ENCODE measurements at regions of chr1 and their contacts with region 1.

Region 1: GRCh38 chr1:162035241-162035640 is 11.6 kb upstream of the OLFML2B start:
- DNase-seq: no peak
- ATAC-seq: no peak
- H3K4me3 ChIP-seq: no peak overlapping the region
- H3K4me3 Mint-ChIP-seq: no peak overlapping the region
- H3K27ac ChIP-seq: no peak overlapping the region
- H3K27ac Mint-ChIP-seq: no peak overlapping the region
- H3K4me1 ChIP-seq: no peaks in the 10 kb centered on the region
- H3K4me1 Mint-ChIP-seq: peaks cover 0 to 7% (median 2%) of the 10 kb centered on the region in 3 donors
- H3K27me3 ChIP-seq: peaks cover 0 to 13% of the 10 kb centered on the region in 2 experiments
- H3K27me3 Mint-ChIP-seq: peaks cover 10 to 21% of the 10 kb centered on the region in 2 donors

Region 2: GRCh38 chr1:161792740-161793139 is 242.5 kb before region 1 on chr1:
- CTCF ChIA-PET with region 1: interaction called, 60 to 205 read pairs
- POLR2A ChIA-PET with region 1: interaction called in 1 of 2 experiments, 5 read pairs
- DNase-seq: peak in 2 of 35 experiments; percentile 18 to 64
- ATAC-seq: peak in 2 of 4 experiments; percentile 38 to 48
- H3K4me3 ChIP-seq: no peak overlapping the region
- H3K4me3 Mint-ChIP-seq: no peak overlapping the region
- H3K27ac ChIP-seq: no peak overlapping the region
- H3K27ac Mint-ChIP-seq: no peak overlapping the region
- H3K4me1 ChIP-seq: no peaks in the 10 kb centered on the region
- H3K4me1 Mint-ChIP-seq: peaks cover 5 to 6% (median 6%) of the 10 kb centered on the region in 3 donors
- H3K27me3 ChIP-seq: no peaks in the 10 kb centered on the region
- H3K27me3 Mint-ChIP-seq: no peaks in the 10 kb centered on the region

Region 3: GRCh38 chr1:161864577-161864976 is 170.7 kb before region 1 on chr1:
- CTCF ChIA-PET with region 1: interaction called, 16 to 22 read pairs
- POLR2A ChIA-PET with region 1: no interaction called
- DNase-seq: peak in 19 of 35 experiments; percentile 1 to 34 (median 4)
- ATAC-seq: no peak
- H3K4me3 ChIP-seq: no peak overlapping the region
- H3K4me3 Mint-ChIP-seq: no peak overlapping the region
- H3K27ac ChIP-seq: no peak overlapping the region
- H3K27ac Mint-ChIP-seq: no peak overlapping the region
- H3K4me1 ChIP-seq: no peaks in the 10 kb centered on the region
- H3K4me1 Mint-ChIP-seq: no peaks in the 10 kb centered on the region
- H3K27me3 ChIP-seq: no peaks in the 10 kb centered on the region
- H3K27me3 Mint-ChIP-seq: no peaks in the 10 kb centered on the region

Region 4: GRCh38 chr1:161962091-161962887 is 73.0 kb before region 1 on chr1:
- CTCF ChIA-PET with region 1: no interaction called
- POLR2A ChIA-PET with region 1: no interaction called
- DNase-seq: peak in 1 of 35 experiments; percentile 12
- ATAC-seq: peak; percentile 34 to 64 (median 52)
- H3K4me3 ChIP-seq: peak overlapping the region in 1 of 2 donors; percentile 22
- H3K4me3 Mint-ChIP-seq: peak overlapping the region; percentile 62 to 88 (median 76)
- H3K27ac ChIP-seq: no peak overlapping the region
- H3K27ac Mint-ChIP-seq: peak overlapping the region; percentile 82 to 96
- H3K4me1 ChIP-seq: peaks cover 0 to 2% of the 10 kb centered on the region in 2 experiments
- H3K4me1 Mint-ChIP-seq: peaks cover 23 to 39% (median 30%) of the 10 kb centered on the region in 3 donors
- H3K27me3 ChIP-seq: no peaks in the 10 kb centered on the region
- H3K27me3 Mint-ChIP-seq: no peaks in the 10 kb centered on the region

Region 5: DNA sequence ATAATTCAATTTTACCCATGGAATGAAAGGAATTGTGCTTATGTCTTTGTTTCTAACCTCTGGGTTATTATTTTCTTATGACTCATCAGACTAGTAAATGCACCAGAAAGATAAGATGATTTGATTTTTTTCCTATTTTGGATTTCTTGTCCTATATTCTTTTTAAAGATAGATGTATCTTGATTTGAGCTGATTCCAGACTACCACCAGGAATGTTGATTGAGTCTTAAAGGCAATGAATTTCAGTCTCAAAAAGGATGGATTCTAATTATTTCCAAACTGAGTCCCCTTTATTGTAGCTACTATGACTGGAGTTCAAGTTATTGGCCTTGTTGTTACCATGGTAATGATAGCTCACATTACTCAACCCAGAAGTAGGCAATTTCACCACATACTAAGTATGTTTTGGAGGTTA is 938.1 kb after region 1 on chr1:
- CTCF ChIA-PET with region 1: no interaction called
- POLR2A ChIA-PET with region 1: no interaction called
- DNase-seq: no peak
- ATAC-seq: no peak
- H3K4me3 ChIP-seq: no peak overlapping the region
- H3K4me3 Mint-ChIP-seq: no peak overlapping the region
- H3K27ac ChIP-seq: no peak overlapping the region
- H3K27ac Mint-ChIP-seq: no peak overlapping the region
- H3K4me1 ChIP-seq: no peaks in the 10 kb centered on the region
- H3K4me1 Mint-ChIP-seq: no peaks in the 10 kb centered on the region
- H3K27me3 ChIP-seq: peaks cover 0 to 5% of the 10 kb centered on the region in 2 experiments
- H3K27me3 Mint-ChIP-seq: peaks cover 2 to 13% of the 10 kb centered on the region in 2 donors